Dorsolateral prefrontal cortex (tissue), 120 donors: ENCODE measurements at regions of chr1 and their contacts with region 1.

Region 1: DNA sequence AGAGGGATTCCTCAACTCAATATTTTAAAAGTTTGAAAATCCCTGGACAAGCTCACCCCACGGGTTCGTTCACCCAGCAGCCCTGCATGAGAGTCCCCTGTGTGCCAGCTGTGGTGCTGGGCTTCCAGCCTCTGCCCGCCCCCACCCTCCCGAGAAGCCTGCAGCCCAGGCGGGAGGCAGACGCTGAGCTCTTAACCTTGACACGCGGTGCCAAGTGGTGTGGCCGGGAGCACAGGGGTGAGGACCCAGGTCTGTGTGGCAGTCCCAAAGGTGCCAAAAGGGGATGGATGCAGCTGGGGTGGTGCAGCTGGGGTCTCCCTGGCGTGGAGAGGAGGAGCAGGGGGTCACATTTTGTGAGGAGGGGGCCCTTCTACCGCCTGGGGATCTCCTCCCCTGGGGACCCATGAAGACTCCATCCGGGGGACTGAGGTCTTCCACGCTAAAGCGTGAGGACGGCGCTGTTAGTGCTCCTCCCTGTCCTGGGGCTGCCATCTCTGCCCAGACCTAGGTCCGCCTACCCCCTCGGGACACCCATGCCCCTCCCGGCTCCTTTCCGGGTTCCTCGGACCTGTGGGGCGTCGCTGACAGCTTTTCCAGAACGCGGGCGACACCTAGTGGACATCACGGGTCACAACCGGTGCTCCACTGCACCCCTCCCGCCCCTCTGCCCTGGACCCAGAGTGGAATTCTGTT is 12.9 kb downstream of the PLA2G2F start:
- DNase-seq: peak; percentile 69 to 84 (median 76)
- H3K4me3 ChIP-seq: peak overlapping the region; percentile 8 to 68 (median 50)
- H3K27ac ChIP-seq: peak overlapping the region in 50 of 59 donors; percentile 38 to 91 (median 78)
- H3K27me3 ChIP-seq: no peaks in the 10 kb centered on the region
- CTCF ChIP-seq: peak; percentile 78 to 99 (median 95)

Region 2: DNA sequence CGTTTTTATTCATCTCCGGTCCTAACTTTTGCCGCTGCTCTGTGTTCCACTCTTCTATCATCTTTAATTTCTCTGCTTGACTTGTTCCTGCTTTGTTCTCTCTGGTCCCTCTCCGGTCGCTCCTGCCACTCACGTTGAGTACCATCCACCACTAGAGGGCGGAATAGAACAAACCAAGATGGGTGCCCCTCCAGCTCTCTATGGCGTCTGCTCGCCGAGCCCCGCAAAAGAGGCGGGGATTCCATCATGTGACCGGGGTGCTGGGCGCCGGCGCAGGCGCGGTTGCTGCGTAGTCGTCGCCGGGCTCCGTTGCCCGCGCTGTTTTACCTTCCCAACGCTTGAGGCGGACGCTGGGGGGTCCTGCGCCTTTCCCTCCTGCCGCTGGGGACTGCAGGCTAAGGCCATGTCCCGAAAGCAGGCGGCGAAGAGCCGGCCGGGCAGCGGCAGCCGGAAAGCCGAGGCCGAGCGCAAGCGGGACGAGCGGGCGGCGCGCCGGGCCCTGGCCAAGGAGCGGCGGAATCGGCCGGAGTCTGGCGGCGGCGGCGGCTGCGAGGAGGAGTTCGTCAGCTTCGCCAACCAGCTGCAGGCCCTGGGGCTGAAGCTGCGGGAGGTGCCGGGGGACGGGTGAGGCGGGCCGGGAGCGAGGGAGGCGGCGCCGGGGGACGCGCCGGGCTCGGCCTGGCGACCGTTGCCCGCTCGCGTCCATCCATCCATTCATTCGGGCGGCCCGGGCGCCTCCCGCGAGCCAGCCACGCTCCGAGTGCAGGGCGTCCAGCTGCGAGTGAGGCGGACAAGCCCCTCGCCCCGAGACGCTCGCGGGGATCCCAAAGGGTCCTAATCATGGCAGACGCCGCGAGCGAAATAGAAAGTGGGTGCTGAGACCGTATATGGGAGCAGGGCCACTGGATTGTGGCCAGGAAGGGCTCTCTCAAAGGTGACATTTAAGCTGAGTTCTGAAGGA is 269.7 kb before region 1 on chr1 and contains the start of gene OTUD3:
- intact Hi-C with region 1: loop called in 1 of 2 experiments (anchors 1 kb)
- DNase-seq: peak; percentile 83 to 96 (median 94)
- H3K4me3 ChIP-seq: peak within 1 kb of the TSS; percentile 49 to 99 (median 90)
- H3K27ac ChIP-seq: peak within 1 kb of the TSS; percentile 6 to 96 (median 89)
- H3K27me3 ChIP-seq: peaks cover 0 to 7% (median 0%) of the 10 kb centered on the region in 45 donors
- CTCF ChIP-seq: peak; percentile 91 to 100 (median 98)
- total RNA-seq, gene OTUD3: 16.6 to 72.2 (median 30.5) TPM